HCT116 (cell line): ENCODE measurements at regions of chr6 and their contacts with region 1.

Region 1: GRCh38 chr6:25278914-25279747 is at the start of gene CARMIL1:
- DNase-seq: peak; percentile 73
- ATAC-seq: peak; percentile 91
- H3K4me3 ChIP-seq: peak within 1 kb of the TSS; percentile 72 to 87
- H3K27ac ChIP-seq: peak within 1 kb of the TSS; percentile 65
- H3K4me1 ChIP-seq: peaks cover 13 to 24% of the 10 kb centered on the region in 2 experiments
- H3K27me3 ChIP-seq: no peaks in the 10 kb centered on the region
- CTCF ChIP-seq: peak; percentile 51 to 83 (median 56); a peak in 4 of 6 replicates
- POLR2A ChIP-seq: peak; percentile 58
- RAD21 ChIP-seq: peak; percentile 86
- total RNA-seq, gene CARMIL1: 21.7 TPM

Region 2: GRCh38 chr6:25311331-25311840 is 32.3 kb after region 1 on chr6:
- CTCF ChIA-PET with region 1: no interaction called
- POLR2A ChIA-PET with region 1: interaction called, 5 read pairs
- RAD21 ChIA-PET with region 1: no interaction called
- intact Hi-C with region 1: loop called (anchors 2 kb)
- DNase-seq: peak; percentile 60
- ATAC-seq: peak; percentile 91
- H3K4me3 ChIP-seq: peak overlapping the region in 1 of 2 experiments; percentile 1; a peak in 1 of 4 replicates
- H3K27ac ChIP-seq: peak overlapping the region; percentile 16; the same call in 1 of the 2 replicates
- H3K4me1 ChIP-seq: peaks cover 31 to 39% of the 10 kb centered on the region in 2 experiments
- H3K27me3 ChIP-seq: no peaks in the 10 kb centered on the region
- CTCF ChIP-seq: no peak
- POLR2A ChIP-seq: no peak
- RAD21 ChIP-seq: no peak

Region 3: DNA sequence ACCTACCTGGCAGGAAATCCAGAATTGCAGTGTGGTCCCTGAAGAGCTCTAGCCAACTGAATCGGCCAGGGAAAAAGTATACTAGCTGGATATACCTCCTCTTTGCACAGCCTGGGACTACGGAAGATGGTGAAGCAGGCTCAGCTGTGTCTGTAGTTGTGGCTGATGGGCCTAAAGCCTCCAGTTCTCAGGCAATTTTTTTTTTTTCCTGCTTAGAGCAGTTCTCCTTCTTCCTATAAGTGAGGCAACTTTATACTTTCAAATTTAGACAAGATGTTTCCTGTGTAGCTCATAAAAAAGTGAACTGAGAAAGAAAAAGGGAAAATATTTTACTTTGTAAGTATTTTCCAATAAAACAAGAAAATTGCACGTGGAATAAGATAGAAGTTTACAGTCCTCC is 172.9 kb after region 1 on chr6:
- CTCF ChIA-PET with region 1: no interaction called
- POLR2A ChIA-PET with region 1: no interaction called
- RAD21 ChIA-PET with region 1: no interaction called
- intact Hi-C with region 1: no loop called
- DNase-seq: no peak
- ATAC-seq: no peak
- H3K4me3 ChIP-seq: no peak overlapping the region
- H3K27ac ChIP-seq: no peak overlapping the region
- H3K4me1 ChIP-seq: no peaks in the 10 kb centered on the region
- H3K27me3 ChIP-seq: no peaks in the 10 kb centered on the region
- CTCF ChIP-seq: no peak
- POLR2A ChIP-seq: no peak
- RAD21 ChIP-seq: no peak

Region 4: DNA sequence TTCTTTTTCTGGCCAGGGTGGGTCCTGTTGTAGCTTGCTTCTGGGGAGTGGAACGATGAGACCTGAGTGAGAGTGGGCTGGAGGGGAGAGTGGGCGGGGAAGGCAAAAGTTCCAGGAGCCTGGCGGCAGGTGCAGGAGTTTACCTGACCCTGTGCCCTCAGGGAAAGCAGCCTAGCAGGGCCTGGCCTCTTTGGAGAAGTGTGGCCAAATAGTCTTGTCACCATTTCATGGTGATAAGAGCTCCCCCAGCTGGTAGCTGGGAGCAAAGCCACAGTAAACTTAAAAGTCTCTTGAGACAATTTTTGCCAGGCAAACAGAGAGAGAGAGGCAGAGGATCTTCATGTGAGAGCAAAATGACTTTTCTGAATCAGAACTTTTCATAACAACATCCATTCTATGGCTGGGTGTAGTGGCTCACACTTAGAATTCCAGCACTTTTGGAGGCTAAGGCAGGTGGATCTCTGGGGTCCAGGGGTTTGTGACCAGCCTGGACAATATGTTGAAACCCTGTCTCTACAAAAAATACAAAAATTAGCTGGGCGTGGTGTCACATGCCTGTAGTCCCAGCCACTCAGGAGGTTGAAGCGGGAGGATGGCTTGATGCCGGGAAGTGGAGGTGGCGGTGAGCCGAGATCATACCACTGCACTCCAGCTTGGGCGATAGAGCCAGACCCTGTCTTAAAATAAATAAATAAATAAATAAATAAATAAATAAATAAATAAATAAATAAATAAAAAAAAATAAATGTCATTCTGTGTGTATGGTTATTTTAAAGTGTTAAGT is 211.1 kb after region 1 on chr6:
- CTCF ChIA-PET with region 1: interaction called, 44 read pairs
- POLR2A ChIA-PET with region 1: interaction called, 3 read pairs
- RAD21 ChIA-PET with region 1: interaction called, 4 to 8 read pairs
- intact Hi-C with region 1: loop called (anchors 1 kb)
- DNase-seq: peak; percentile 69
- ATAC-seq: peak; percentile 98
- H3K4me3 ChIP-seq: no peak overlapping the region
- H3K27ac ChIP-seq: no peak overlapping the region
- H3K4me1 ChIP-seq: peaks cover 0 to 16% of the 10 kb centered on the region in 2 experiments; a peak in 1 of 4 replicates
- H3K27me3 ChIP-seq: no peaks in the 10 kb centered on the region
- CTCF ChIP-seq: peak; percentile 83 to 84 (median 84)
- POLR2A ChIP-seq: no peak
- RAD21 ChIP-seq: peak; percentile 88

Region 5: GRCh38 chr6:25556516-25556915 is 277.4 kb after region 1 on chr6:
- CTCF ChIA-PET with region 1: interaction called, 24 read pairs
- POLR2A ChIA-PET with region 1: interaction called, 3 read pairs
- RAD21 ChIA-PET with region 1: no interaction called
- intact Hi-C with region 1: no loop called
- DNase-seq: peak; percentile 71
- ATAC-seq: peak; percentile 87
- H3K4me3 ChIP-seq: no peak overlapping the region
- H3K27ac ChIP-seq: no peak overlapping the region
- H3K4me1 ChIP-seq: no peaks in the 10 kb centered on the region
- H3K27me3 ChIP-seq: no peaks in the 10 kb centered on the region
- CTCF ChIP-seq: peak; percentile 56 to 89 (median 79)
- POLR2A ChIP-seq: no peak
- RAD21 ChIP-seq: peak; percentile 65

Region 6: DNA sequence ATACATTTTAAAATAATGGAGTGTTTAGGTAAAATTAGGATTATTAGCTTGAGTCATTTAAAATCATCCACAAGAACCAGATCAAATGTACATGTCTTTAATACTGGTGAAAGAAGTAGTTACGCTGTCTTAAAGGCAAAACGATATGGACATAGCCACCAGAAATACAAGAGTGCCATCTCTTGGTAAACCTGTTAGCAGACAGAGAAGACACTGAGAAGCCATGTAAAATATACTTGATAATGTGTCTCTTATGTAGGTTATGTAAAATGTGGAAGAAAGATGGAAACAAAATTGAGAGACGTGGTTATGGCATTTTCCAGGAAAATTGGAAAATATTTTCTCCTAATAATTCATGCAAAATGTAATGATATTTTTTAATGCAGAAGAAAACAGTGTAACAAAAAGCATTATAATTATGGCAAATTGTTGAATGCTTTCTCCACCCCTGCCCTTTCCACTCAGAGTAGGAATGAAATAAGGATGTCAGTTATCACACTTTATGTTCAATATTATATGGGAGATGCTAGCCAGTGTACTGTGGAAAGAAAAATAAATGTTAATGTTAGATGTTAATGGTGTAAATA is 663.5 kb after region 1 on chr6:
- CTCF ChIA-PET with region 1: no interaction called
- POLR2A ChIA-PET with region 1: no interaction called
- RAD21 ChIA-PET with region 1: no interaction called
- intact Hi-C with region 1: loop called (anchors 10 kb)
- DNase-seq: peak; percentile 48
- ATAC-seq: peak; percentile 84
- H3K4me3 ChIP-seq: no peak overlapping the region
- H3K27ac ChIP-seq: no peak overlapping the region
- H3K4me1 ChIP-seq: no peaks in the 10 kb centered on the region
- H3K27me3 ChIP-seq: no peaks in the 10 kb centered on the region
- CTCF ChIP-seq: peak; percentile 42 to 73 (median 60); a peak in 4 of 6 replicates
- POLR2A ChIP-seq: no peak
- RAD21 ChIP-seq: peak; percentile 88